IMR-90 (cell line): ENCODE measurements at regions of chr10 and their contacts with region 1.

Region 1: GRCh38 chr10:71812016-71812912 is 38.8 kb downstream of the PSAP start:
- DNase-seq: peak; percentile 34
- ATAC-seq: peak; percentile 91
- H3K4me3 ChIP-seq: no peak overlapping the region
- H3K27ac ChIP-seq: no peak overlapping the region
- H3K4me1 ChIP-seq: no peaks in the 10 kb centered on the region
- H3K27me3 ChIP-seq: peaks cover 4% of the 10 kb centered on the region; the same call in 1 of the 2 replicates
- CTCF ChIP-seq: peak; percentile 87
- POLR2A ChIP-seq: no peak
- RAD21 ChIP-seq: peak; percentile 91

Region 2: GRCh38 chr10:71383972-71384687 is 428.1 kb before region 1 on chr10:
- CTCF ChIA-PET with region 1: no interaction called
- POLR2A ChIA-PET with region 1: no interaction called
- dilution Hi-C with region 1: no loop called
- in situ Hi-C with region 1: loop called (anchors 10 kb)
- intact Hi-C with region 1: loop called (anchors 2 kb)
- DNase-seq: peak; percentile 21
- ATAC-seq: peak; percentile 98
- H3K4me3 ChIP-seq: no peak overlapping the region
- H3K27ac ChIP-seq: no peak overlapping the region
- H3K4me1 ChIP-seq: no peaks in the 10 kb centered on the region
- H3K27me3 ChIP-seq: peaks cover 44% of the 10 kb centered on the region
- CTCF ChIP-seq: peak; percentile 83
- POLR2A ChIP-seq: no peak
- RAD21 ChIP-seq: peak; percentile 77

Region 3: DNA sequence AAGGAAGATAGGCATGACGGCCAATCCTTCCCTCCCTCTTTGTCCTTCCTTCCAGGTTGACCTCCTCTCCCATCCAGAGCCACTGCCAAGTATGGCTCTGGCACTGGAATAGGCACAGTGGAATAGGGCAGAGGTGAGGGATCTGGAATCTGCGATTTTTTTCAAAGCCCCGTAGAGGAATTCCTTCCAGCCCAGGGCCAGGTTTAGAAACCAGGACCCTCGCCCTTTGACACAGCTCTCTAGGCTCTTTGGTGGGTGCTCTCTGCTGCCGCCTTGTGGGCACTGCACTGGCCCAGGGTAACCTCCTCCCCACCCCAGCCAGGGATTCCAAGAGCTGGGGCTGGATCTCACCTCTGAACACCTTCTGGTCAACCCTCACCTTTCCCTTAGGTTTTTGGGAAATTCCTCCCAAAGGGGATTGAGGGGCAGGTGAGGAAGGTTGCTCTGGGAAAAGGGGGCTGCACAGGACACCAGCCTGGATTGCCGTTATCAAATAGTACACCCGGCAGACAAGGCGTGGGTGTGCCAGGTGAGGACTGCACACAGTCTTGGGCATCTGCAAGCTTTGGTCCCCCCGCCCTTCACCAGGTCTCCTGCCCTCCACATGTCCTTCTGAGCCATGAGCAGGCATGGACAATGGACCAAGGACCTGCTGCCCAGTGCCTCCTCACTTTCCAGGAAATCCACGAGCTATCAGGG is 115.5 kb before region 1 on chr10:
- CTCF ChIA-PET with region 1: interaction called, 6 read pairs
- POLR2A ChIA-PET with region 1: no interaction called
- dilution Hi-C with region 1: no loop called
- in situ Hi-C with region 1: no loop called
- intact Hi-C with region 1: loop called (anchors 5 kb)
- DNase-seq: no peak
- ATAC-seq: peak; percentile 89
- H3K4me3 ChIP-seq: no peak overlapping the region
- H3K27ac ChIP-seq: no peak overlapping the region
- H3K4me1 ChIP-seq: no peaks in the 10 kb centered on the region
- H3K27me3 ChIP-seq: peaks cover 37% of the 10 kb centered on the region
- CTCF ChIP-seq: peak; percentile 63
- POLR2A ChIP-seq: no peak
- RAD21 ChIP-seq: peak; percentile 50

Region 4: GRCh38 chr10:71713135-71714030 is 98.9 kb before region 1 on chr10:
- CTCF ChIA-PET with region 1: no interaction called
- POLR2A ChIA-PET with region 1: no interaction called
- dilution Hi-C with region 1: no loop called
- in situ Hi-C with region 1: no loop called
- intact Hi-C with region 1: loop called (anchors 5 kb)
- DNase-seq: peak; percentile 80
- ATAC-seq: peak; percentile 95
- H3K4me3 ChIP-seq: no peak overlapping the region
- H3K27ac ChIP-seq: peak overlapping the region; percentile 75
- H3K4me1 ChIP-seq: peaks cover 25% of the 10 kb centered on the region
- H3K27me3 ChIP-seq: peaks cover 3% of the 10 kb centered on the region; the same call in 1 of the 2 replicates
- CTCF ChIP-seq: peak; percentile 28; the same call in 1 of the 2 replicates
- POLR2A ChIP-seq: no peak
- RAD21 ChIP-seq: 0 out of 2 replicates have a peak, but pooled peaks have one; percentile 16

Region 5: DNA sequence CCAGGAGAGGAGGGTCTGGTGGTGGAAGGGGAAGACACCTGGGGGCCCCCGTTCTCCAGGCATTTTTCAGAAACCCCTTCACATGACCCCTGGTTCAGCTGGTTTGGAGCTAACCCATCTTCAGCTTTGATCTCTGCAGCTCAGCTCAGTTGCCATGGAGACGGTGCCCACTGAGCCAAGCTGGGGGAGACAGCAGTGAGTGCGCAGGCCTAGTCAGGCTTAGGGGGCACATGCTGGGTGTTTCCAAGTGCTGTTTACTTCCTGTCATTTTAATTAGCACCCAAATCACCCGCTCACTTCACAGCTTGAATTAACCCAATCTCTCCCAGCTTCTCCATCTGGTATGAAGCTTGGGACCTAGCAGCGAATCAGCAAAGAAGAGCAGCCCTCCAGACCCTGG is 267.1 kb after region 1 on chr10:
- CTCF ChIA-PET with region 1: no interaction called
- POLR2A ChIA-PET with region 1: no interaction called
- dilution Hi-C with region 1: no loop called
- in situ Hi-C with region 1: no loop called
- intact Hi-C with region 1: no loop called
- DNase-seq: no peak
- ATAC-seq: no peak
- H3K4me3 ChIP-seq: no peak overlapping the region
- H3K27ac ChIP-seq: no peak overlapping the region
- H3K4me1 ChIP-seq: no peaks in the 10 kb centered on the region
- H3K27me3 ChIP-seq: peaks cover 58% of the 10 kb centered on the region
- CTCF ChIP-seq: no peak
- POLR2A ChIP-seq: no peak
- RAD21 ChIP-seq: no peak